ENCODE measurements at regions of chr6 and their contacts with region 1.

Region 1: DNA sequence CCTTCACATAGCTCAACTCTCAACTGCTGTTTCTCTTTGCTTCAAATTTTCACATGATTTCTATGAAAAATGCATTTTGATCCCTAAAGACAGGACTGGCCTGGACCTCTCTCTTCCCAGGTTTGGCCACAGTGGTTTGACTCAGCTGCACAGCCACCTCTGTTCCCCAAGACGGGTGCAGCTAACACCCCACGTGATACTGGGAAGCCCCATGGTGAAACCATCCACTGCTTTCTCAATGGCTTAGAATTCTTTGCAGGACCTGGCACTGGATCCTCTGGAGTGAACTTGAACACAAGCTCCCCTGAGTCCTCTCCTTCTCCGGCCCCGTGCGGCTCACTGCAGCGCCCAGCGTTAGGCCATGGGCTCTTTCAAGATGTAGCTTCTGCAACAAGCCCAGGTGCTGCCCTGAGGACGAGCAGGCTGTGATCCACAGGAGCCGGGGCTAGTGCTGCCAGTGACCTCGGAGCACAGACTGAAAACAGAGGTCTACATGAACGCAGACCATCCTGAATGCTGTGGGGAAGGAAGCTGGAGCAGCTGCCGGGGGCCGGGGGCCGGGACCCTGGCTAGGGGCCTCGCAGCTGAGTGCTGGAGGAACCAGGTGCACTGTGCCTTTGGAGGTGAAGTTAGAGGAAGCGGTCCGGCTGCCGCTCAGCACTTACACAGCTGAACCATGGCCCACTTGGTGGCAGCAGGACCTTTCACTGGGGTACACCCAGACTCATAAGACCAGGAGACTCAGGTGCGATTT is 58.8 kb upstream of the MPC1 start:
- DNase-seq: no peak
- H3K4me3 ChIP-seq: no peak overlapping the region
- H3K27ac ChIP-seq: no peak overlapping the region
- H3K4me1 ChIP-seq: no peaks in the 10 kb centered on the region
- H3K27me3 ChIP-seq: no peaks in the 10 kb centered on the region
- CTCF ChIP-seq: no peak

Region 2: DNA sequence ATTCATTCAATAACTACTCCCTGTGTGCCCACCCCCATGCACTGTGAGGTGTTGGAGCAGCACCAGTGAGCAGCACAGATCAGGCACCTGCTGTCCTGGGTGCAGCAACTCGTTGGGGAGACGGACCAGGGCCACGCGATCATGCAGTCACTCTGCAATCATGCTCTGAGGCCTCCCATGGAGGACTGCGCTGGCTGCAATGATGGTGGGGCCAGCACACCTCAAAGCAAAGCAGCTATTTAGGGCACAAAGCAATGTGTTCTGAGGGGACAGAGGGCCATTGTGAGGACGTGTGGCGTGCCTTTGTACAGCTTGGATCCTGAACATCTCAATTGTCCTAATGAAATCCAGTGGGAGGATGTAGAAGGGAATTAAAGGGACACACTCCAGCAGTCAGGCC is 17.7 kb before region 1 on chr6:
- intact Hi-C with region 1: no loop called
- DNase-seq: no peak
- H3K4me3 ChIP-seq: no peak overlapping the region
- H3K27ac ChIP-seq: no peak overlapping the region
- H3K4me1 ChIP-seq: no peaks in the 10 kb centered on the region
- H3K27me3 ChIP-seq: no peaks in the 10 kb centered on the region
- CTCF ChIP-seq: no peak

Region 3: DNA sequence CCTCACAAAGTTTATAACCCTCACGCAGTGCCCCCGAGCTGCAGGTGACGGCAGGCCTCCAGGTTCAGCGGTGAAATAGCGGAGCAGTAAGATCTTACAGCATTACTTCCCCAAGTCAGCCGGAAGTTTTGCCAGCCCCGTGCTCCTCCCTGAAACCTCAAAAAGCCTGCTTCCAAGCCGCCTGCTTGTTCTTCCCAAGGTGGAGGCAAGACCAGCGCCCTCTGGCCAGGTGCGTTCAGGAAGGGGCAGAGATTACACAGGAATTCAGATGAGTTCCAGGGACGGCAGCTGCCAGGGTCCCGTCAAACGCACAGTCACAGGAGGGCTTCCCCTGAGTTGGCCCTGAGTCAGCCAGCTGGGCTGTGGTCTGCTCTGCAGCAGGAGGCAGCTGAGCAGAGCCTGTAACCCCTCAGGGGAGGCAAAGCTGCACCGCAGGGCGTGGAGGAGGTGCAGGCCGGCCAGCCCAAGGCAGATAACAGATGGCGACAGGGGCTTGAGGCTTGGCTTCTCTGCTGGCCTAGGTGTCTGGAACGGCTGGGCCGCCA is 309.6 kb after region 1 on chr6:
- intact Hi-C with region 1: loop called (anchors 10 kb)
- DNase-seq: no peak
- H3K4me3 ChIP-seq: no peak overlapping the region
- H3K27ac ChIP-seq: no peak overlapping the region
- H3K4me1 ChIP-seq: no peaks in the 10 kb centered on the region
- H3K27me3 ChIP-seq: no peaks in the 10 kb centered on the region
- CTCF ChIP-seq: no peak

Measured in ascending aorta (tissue), 2 donors.